WTC11 (cell line): ENCODE measurements at regions of chr4 and their contacts with region 1.

Region 1: DNA sequence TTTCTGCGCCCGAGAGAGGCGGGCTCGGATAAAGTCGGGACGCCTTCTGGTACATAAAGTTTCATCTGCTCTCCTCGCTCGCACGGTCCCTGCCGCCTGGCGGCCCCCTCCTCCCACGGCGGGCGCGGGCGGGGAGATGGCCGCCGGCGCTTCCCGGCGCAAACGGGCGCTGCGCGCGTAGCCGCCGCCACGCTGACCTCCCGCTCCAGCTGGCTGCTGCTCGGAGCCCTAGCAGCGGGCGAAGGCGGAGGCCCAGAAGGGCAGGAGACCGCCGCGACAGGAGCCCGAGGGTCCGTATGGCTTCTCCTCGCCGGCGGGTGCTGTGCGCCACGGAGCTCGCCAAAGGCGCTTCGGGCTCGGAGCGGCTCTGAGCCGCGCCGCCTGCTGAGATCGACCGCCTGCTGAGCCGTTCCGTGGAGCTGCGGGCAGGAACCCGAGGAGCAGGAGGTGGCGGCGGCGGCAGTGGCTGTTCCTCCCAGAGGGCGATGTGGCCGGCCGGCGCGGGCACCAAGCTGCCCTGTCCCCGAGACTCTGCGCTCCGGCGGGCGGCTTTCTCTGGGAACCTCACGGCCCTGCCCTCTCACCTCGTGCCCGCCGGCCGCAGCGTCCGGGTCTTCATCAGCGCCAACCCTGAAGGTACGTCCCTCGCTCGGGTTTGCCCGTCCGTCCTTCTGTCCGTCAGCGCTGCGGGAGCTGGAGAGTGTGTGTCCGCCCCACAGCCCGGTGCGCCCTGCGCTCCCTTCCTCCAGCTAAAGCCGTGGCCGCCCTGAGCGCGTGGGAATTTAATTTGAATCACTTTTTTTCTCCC is at the start of gene NWD2:
- DNase-seq: peak; percentile 49
- ATAC-seq: peak; percentile 23
- H3K4me3 Mint-ChIP-seq: peak within 1 kb of the TSS; percentile 85
- H3K27ac Mint-ChIP-seq: no peak within 1 kb of the TSS
- H3K4me1 Mint-ChIP-seq: peaks cover 27% of the 10 kb centered on the region
- H3K27me3 Mint-ChIP-seq: peaks cover 93% of the 10 kb centered on the region
- CTCF ChIP-seq: no peak
- total RNA-seq, gene NWD2: 0.05 to 0.07 TPM in 2 of 3 replicates, not detected in the other

Region 2: DNA sequence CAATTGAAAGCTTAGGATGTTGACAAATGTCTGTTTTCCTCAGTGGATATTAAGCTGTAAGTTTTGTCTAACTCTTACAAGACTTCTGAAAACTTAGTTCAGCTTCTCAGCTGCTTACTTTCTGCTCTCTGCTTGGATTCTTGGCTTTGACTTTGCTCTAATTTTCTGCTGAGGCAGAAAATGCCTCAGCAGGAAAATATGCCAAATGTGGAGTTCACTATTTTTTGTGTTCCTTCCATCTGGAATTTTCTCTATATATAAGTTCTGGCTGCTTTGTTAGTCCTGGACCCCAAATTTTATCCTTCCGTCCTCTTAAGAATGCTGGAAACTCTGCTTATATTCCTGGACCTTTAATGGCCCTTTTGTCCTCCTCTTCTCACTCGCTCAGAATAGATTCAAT is 352.8 kb before region 1 on chr4:
- CTCF ChIA-PET with region 1: no interaction called
- POLR2A ChIA-PET with region 1: no interaction called
- DNase-seq: no peak
- ATAC-seq: no peak
- H3K4me3 Mint-ChIP-seq: no peak overlapping the region
- H3K27ac Mint-ChIP-seq: no peak overlapping the region
- H3K4me1 Mint-ChIP-seq: peaks cover 4% of the 10 kb centered on the region
- H3K27me3 Mint-ChIP-seq: no peaks in the 10 kb centered on the region
- CTCF ChIP-seq: no peak

Region 3: DNA sequence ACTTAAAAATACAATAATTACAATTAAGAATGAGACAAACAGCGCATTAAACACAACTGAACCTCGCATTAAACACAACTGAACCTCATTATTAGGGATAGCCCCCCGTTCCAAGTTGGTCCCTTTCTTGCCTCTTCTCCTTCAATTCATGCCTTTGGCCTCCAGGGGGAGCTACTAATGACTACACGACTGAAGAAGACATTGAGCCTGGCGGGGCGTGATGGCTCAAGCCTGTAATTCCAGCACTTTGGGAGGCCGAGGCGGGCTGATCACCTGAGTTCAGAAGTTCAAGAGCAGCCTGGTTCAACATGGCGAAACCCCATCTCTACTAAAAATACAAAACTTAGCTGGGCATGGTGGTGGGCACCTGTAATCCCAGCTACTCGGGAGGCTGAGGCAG is 56.7 kb before region 1 on chr4:
- CTCF ChIA-PET with region 1: interaction called, 19 read pairs
- POLR2A ChIA-PET with region 1: no interaction called
- DNase-seq: peak; percentile 63
- ATAC-seq: peak; percentile 79; the same call in 1 of the 2 replicates
- H3K4me3 Mint-ChIP-seq: no peak overlapping the region
- H3K27ac Mint-ChIP-seq: no peak overlapping the region
- H3K4me1 Mint-ChIP-seq: no peaks in the 10 kb centered on the region
- H3K27me3 Mint-ChIP-seq: no peaks in the 10 kb centered on the region; the same call in 1 of the 2 replicates
- CTCF ChIP-seq: peak; percentile 77

Region 4: DNA sequence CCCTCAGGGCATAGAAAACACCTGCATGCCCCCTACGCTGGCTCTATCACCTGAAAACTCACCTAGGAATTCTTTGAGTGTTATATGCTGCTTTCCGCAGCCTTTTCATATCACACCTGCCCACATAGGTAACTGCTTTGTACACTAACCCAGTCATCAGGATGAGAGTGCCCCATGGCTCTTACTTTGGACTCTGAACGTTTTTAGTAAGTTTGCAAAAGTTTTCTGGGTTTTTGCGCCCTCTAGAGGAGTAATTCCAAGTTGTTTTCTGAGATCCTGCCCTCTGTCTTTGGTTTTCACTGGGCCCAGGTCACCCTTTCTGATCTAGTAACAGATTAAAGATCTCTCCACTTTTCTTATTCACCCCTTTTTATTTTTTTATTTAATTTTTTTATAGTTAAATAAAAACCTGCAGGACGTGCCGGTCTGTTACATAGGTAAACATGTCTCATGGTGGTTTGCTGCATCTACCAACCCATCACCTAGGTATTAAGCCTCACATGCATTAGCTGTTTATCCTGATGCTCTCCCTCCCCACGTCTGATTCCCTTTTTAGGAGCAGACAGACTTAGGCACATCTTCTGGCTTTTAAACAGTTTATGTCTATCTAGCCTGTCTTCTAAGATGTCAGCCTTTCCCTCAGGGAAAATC is 138.9 kb after region 1 on chr4:
- CTCF ChIA-PET with region 1: interaction called, 55 read pairs
- POLR2A ChIA-PET with region 1: no interaction called
- DNase-seq: no peak
- ATAC-seq: peak; percentile 68
- H3K4me3 Mint-ChIP-seq: no peak overlapping the region
- H3K27ac Mint-ChIP-seq: no peak overlapping the region
- H3K4me1 Mint-ChIP-seq: peaks cover 8% of the 10 kb centered on the region
- H3K27me3 Mint-ChIP-seq: no peaks in the 10 kb centered on the region; the same call in 1 of the 2 replicates
- CTCF ChIP-seq: peak; percentile 44; the same call in 1 of the 2 replicates

Region 5: GRCh38 chr4:37389967-37390580 is 145.3 kb after region 1 on chr4:
- CTCF ChIA-PET with region 1: interaction called, 55 read pairs
- POLR2A ChIA-PET with region 1: no interaction called
- DNase-seq: peak; percentile 16
- ATAC-seq: peak; percentile 39
- H3K4me3 Mint-ChIP-seq: no peak overlapping the region
- H3K27ac Mint-ChIP-seq: no peak overlapping the region
- H3K4me1 Mint-ChIP-seq: peaks cover 28% of the 10 kb centered on the region
- H3K27me3 Mint-ChIP-seq: no peaks in the 10 kb centered on the region
- CTCF ChIP-seq: peak; percentile 12; the same call in 1 of the 2 replicates

Region 6: GRCh38 chr4:37440491-37440890 is 195.7 kb after region 1 on chr4:
- CTCF ChIA-PET with region 1: no interaction called
- POLR2A ChIA-PET with region 1: no interaction called
- DNase-seq: no peak
- ATAC-seq: no peak
- H3K4me3 Mint-ChIP-seq: no peak overlapping the region
- H3K27ac Mint-ChIP-seq: no peak overlapping the region
- H3K4me1 Mint-ChIP-seq: no peaks in the 10 kb centered on the region
- H3K27me3 Mint-ChIP-seq: no peaks in the 10 kb centered on the region
- CTCF ChIP-seq: no peak